ENCODE measurements at regions of chr2 and their contacts with region 1.

Region 1: GRCh38 chr2:207474863-207475485 is 54.8 kb upstream of the CREB1 start:
- DNase-seq: peak; percentile 46
- H3K4me3 ChIP-seq: no peak overlapping the region
- CTCF ChIP-seq: peak; percentile 37

Region 2: GRCh38 chr2:206981739-206982340 is 493.1 kb before region 1 on chr2:
- in situ Hi-C with region 1: loop called (anchors 25 kb)
- DNase-seq: peak; percentile 65
- H3K4me3 ChIP-seq: no peak overlapping the region
- CTCF ChIP-seq: peak; percentile 91